Psoas muscle (tissue), 8 donors: ENCODE measurements at regions of chr20 and their contacts with region 1.

Region 1: GRCh38 chr20:38645980-38646858 is 44.6 kb downstream of the ARHGAP40 start:
- DNase-seq: peak; percentile 69 to 85
- ATAC-seq: peak; percentile 87 to 99 (median 89)
- H3K4me3 ChIP-seq: peak overlapping the region; percentile 39
- H3K27ac ChIP-seq: no peak overlapping the region
- H3K4me1 ChIP-seq: peaks cover 3% of the 10 kb centered on the region
- H3K27me3 ChIP-seq: peaks cover 0 to 53% (median 5%) of the 10 kb centered on the region in 3 donors
- CTCF ChIP-seq: peak; percentile 89

Region 2: DNA sequence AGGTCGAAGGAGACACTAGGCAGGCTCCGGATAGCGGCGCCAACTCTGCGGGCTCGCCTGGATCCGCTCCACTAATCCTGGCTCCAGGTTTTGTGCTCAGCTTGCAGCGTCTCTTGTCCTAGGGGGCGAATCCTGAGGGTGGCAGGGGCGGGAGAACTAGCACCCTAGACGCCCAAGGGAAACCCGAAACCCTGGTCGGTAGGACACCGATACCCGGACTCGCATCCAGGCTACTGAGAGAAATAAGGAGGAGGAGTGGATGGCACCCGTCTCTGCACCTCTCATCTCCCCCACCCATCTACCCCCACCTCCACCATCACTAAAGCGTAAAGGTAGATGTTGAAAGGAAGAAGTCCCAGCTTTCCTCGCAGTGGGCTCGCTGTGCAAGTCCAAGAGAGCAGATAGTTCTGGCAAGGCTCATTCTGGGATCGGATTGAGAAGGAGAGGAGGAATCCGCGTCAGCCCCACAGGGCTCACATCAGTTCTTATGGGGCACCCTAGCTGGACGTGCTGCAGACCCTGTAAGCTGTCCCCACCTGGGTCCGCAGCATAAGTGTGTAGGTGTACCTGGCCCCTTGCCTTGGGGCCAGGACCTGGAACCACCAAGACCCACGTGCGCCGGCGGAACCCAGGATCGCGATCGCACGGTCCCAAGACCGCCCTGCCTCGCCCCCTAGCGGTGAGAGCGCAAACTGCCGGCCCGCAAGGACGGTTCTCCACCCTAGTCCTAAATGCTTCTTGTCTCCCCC is 84.9 kb after region 1 on chr20:
- intact Hi-C with region 1: loop called (anchors 5 kb)
- DNase-seq: peak; percentile 62 to 80
- ATAC-seq: peak; percentile 59 to 86 (median 76)
- H3K4me3 ChIP-seq: peak overlapping the region; percentile 46
- H3K27ac ChIP-seq: no peak overlapping the region
- H3K4me1 ChIP-seq: peaks cover 5% of the 10 kb centered on the region
- H3K27me3 ChIP-seq: peaks cover 3 to 96% (median 33%) of the 10 kb centered on the region in 3 donors
- CTCF ChIP-seq: peak; percentile 96

Region 3: DNA sequence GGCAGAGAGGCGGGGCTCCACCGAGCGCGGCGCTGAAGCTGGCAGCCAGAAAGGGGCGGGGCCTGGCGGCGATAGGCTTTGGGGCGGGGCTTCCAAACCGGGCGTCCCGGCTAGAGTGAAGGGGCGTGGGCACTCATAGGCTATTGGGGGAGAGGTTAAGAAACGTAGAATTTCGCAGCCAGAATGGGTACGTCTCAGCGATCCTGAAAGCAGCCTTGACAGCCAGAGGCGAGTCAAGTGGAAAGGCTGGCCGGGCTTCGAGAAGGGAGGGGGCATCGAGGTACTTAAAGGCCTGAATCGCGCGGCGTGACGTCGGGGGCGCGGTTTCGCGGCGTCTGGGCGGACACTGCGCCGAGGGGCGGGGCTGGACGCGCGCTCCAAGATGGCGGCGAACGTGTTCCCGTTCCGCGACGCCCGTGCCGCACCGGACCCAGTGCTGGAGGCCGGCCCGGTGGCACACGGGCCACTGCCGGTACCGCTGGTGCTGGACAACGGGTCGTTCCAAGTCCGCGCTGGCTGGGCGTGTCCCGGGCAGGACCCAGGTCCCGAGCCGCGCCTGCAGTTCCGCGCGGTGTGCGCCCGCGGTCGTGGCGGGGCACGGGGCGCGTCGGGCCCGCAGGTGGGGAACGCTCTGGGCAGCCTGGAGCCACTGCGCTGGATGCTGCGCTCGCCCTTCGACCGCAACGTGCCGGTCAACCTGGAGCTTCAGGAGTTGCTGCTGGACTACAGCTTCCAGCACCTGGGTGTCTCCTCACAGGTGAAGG is 102.1 kb after region 1 on chr20 and contains the start of gene ACTR5:
- intact Hi-C with region 1: loop called (anchors 1 to 2 kb)
- DNase-seq: peak; percentile 92 to 97
- ATAC-seq: peak; percentile 98 to 99 (median 99)
- H3K4me3 ChIP-seq: peak within 1 kb of the TSS; percentile 99
- H3K27ac ChIP-seq: peak within 1 kb of the TSS; percentile 87
- H3K4me1 ChIP-seq: peaks cover 10% of the 10 kb centered on the region
- H3K27me3 ChIP-seq: peaks cover 0 to 3% (median 0%) of the 10 kb centered on the region in 3 donors
- CTCF ChIP-seq: no peak
- total RNA-seq, gene ACTR5: 3.8 to 5.3 (median 4.7) TPM

Region 4: GRCh38 chr20:38883081-38883980 is 237.1 kb after region 1 on chr20:
- intact Hi-C with region 1: loop called in 1 of 2 experiments (anchors 10 kb)
- DNase-seq: no peak
- ATAC-seq: no peak
- H3K4me3 ChIP-seq: no peak overlapping the region
- H3K27ac ChIP-seq: no peak overlapping the region
- H3K4me1 ChIP-seq: no peaks in the 10 kb centered on the region
- H3K27me3 ChIP-seq: peaks cover 0 to 23% (median 4%) of the 10 kb centered on the region in 3 donors
- CTCF ChIP-seq: no peak

Region 5: GRCh38 chr20:38893565-38894090 is 247.4 kb after region 1 on chr20:
- intact Hi-C with region 1: loop called (anchors 5 to 10 kb)
- DNase-seq: peak; percentile 44 to 76
- ATAC-seq: peak; percentile 55 to 78 (median 69)
- H3K4me3 ChIP-seq: no peak overlapping the region
- H3K27ac ChIP-seq: no peak overlapping the region
- H3K4me1 ChIP-seq: no peaks in the 10 kb centered on the region
- H3K27me3 ChIP-seq: peaks cover 0 to 20% (median 1%) of the 10 kb centered on the region in 3 donors
- CTCF ChIP-seq: peak; percentile 73

Region 6: GRCh38 chr20:40600441-40601219 is 1954.4 kb after region 1 on chr20:
- intact Hi-C with region 1: no loop called
- DNase-seq: no peak
- ATAC-seq: no peak
- H3K4me3 ChIP-seq: no peak overlapping the region
- H3K27ac ChIP-seq: no peak overlapping the region
- H3K4me1 ChIP-seq: no peaks in the 10 kb centered on the region
- H3K27me3 ChIP-seq: no peaks in the 10 kb centered on the region
- CTCF ChIP-seq: no peak